Psoas muscle (tissue), 8 donors: ENCODE measurements at regions of chr18 and their contacts with region 1.

Region 1: GRCh38 chr18:42092848-42093247 is 137.8 kb downstream of the PIK3C3 start:
- DNase-seq: no peak
- ATAC-seq: peak in 1 of 4 donors; percentile 55
- H3K4me3 ChIP-seq: no peak overlapping the region
- H3K27ac ChIP-seq: no peak overlapping the region
- H3K4me1 ChIP-seq: no peaks in the 10 kb centered on the region
- H3K27me3 ChIP-seq: peaks cover 0 to 6% (median 0%) of the 10 kb centered on the region in 3 donors
- CTCF ChIP-seq: no peak

Region 2: GRCh38 chr18:42030586-42031182 is 62.2 kb before region 1 on chr18:
- intact Hi-C with region 1: loop called in 1 of 2 experiments (anchors 10 kb)
- DNase-seq: no peak
- ATAC-seq: no peak
- H3K4me3 ChIP-seq: no peak overlapping the region
- H3K27ac ChIP-seq: no peak overlapping the region
- H3K4me1 ChIP-seq: no peaks in the 10 kb centered on the region
- H3K27me3 ChIP-seq: no peaks in the 10 kb centered on the region
- CTCF ChIP-seq: peak; percentile 14

Region 3: DNA sequence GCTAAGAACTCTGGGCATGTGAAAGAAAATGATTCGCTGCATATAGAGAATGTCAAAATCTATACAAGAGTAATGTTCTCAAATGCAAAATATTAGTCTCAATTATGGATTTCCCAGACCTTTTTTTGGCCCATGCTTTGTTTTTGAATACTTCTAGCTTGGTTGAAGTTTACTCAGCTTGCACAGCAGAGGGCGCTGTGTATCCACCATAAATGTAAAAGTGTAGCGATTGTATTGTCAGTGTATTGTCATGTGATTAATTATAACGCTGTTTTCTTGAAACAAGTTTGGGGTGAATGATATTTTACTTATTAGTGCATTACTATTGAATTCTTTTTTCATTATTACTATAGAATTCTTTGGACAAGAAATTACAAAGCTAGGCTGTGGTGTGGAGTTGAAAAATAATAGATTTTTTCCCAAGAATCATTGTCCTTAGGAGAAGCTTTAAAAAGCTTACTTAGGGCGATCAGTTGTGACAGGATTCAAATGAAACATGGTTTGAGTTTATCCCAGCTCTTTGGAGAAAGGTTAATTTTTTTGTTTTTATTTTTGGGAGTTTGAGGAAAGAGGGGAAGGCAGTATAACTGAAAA is 39.6 kb before region 1 on chr18:
- intact Hi-C with region 1: no loop called
- DNase-seq: peak; percentile 12 to 52
- ATAC-seq: peak in 2 of 4 donors; percentile 63 to 71
- H3K4me3 ChIP-seq: no peak overlapping the region
- H3K27ac ChIP-seq: no peak overlapping the region
- H3K4me1 ChIP-seq: no peaks in the 10 kb centered on the region
- H3K27me3 ChIP-seq: no peaks in the 10 kb centered on the region
- CTCF ChIP-seq: peak; percentile 70

Region 4: GRCh38 chr18:42157878-42158277 is 65.0 kb after region 1 on chr18:
- intact Hi-C with region 1: no loop called
- DNase-seq: no peak
- ATAC-seq: no peak
- H3K4me3 ChIP-seq: no peak overlapping the region
- H3K27ac ChIP-seq: no peak overlapping the region
- H3K4me1 ChIP-seq: no peaks in the 10 kb centered on the region
- H3K27me3 ChIP-seq: no peaks in the 10 kb centered on the region
- CTCF ChIP-seq: no peak